ENCODE measurements at regions of chr12 and their contacts with region 1.

Region 1: DNA sequence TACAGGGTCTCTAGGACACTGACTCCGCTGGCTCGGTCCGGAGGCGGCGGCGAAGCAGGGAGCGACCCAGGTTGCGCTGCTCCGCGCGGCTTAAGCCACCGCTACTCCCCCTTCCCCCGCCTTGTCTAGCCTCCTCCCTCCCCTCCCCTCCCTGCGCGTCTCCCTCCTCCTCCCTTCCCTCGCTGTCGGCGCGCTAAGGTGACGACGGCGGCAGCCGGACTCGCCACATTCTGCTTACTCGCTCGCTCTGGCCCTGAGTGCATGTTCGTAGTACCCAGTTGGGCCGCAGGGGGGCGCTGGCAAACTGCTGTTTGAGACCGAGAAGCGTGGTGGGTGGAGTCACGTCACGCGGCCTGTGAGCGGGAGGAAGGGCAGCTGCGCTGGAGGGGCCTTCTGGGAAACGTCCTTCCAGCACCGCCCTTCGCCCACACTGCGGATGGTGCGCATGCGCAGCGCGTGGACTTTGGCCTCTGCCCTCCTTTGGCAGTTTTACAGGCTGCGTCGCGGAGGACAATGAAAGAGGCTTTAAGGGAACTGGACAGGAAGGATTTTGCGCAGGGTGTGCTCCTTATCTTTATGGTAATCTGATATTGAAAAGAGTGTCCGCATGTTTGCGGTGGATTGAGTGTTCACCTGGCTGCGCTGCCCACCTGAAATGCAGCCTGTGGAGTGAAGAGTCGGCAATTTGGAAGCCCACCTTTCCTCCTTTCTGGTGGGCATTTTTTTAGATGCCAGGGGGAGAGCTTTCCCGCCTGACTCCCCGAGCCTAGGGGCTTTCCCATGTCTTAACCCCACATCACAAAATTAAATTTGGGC is at the start of gene SCAF11:
- DNase-seq: peak; percentile 100
- ATAC-seq: peak; percentile 83
- H3K4me3 Mint-ChIP-seq: peak within 1 kb of the TSS; percentile 96
- H3K27ac Mint-ChIP-seq: peak within 1 kb of the TSS; percentile 98
- H3K4me1 Mint-ChIP-seq: peaks cover 47% of the 10 kb centered on the region
- H3K27me3 Mint-ChIP-seq: no peaks in the 10 kb centered on the region
- CTCF ChIP-seq: no peak
- total RNA-seq, gene SCAF11: 180 and 198 TPM in 2 replicates

Region 2: GRCh38 chr12:45728630-45729232 is 261.9 kb before region 1 on chr12:
- CTCF ChIA-PET with region 1: no interaction called
- POLR2A ChIA-PET with region 1: interaction called, 43 read pairs
- intact Hi-C with region 1: loop called (anchors 1 kb)
- DNase-seq: peak; percentile 97
- ATAC-seq: peak; percentile 68
- H3K4me3 Mint-ChIP-seq: peak overlapping the region; percentile 92
- H3K27ac Mint-ChIP-seq: peak overlapping the region; percentile 99
- H3K4me1 Mint-ChIP-seq: peaks cover 41% of the 10 kb centered on the region
- H3K27me3 Mint-ChIP-seq: no peaks in the 10 kb centered on the region
- CTCF ChIP-seq: peak; percentile 60

Region 3: DNA sequence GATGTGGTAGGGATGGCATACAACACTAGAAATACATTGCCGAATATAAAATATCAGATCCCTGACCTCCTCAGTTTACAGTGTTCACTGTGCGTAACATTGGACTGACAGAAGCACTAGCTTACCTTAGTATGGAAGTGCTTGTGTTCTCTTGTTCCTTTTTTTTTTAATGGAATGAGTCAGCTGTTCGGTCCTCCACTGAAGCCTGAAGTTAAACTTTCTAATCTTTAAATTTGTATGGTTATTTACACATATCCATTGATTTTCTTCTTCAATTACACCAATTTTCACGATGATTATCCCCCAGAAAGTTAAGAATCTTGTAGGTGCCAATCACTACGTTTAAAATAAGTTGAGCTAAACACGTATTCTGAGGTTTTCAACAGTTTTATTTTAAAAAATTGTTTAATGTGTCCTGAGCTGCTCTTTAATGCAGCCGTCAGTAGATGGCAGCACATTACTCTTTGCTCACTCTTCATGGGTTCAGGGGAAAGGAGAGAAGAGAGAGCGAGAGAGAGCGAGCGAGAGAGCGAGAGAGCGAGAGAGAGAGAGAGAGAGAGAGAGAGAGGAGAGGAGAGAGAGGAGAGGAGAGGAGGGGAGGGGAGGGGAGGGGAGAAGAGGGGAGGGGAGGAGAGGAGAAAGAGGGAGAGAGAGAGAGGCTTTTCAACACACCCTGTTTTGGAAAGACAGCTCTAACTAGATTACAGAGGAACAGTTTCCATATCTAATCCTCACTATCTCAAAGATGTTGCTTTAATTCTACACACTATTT is 134.4 kb after region 1 on chr12:
- CTCF ChIA-PET with region 1: no interaction called
- POLR2A ChIA-PET with region 1: no interaction called
- intact Hi-C with region 1: loop called (anchors 2 kb)
- DNase-seq: no peak
- ATAC-seq: peak; percentile 93
- H3K4me3 Mint-ChIP-seq: peak overlapping the region; percentile 67
- H3K27ac Mint-ChIP-seq: peak overlapping the region; percentile 72
- H3K4me1 Mint-ChIP-seq: peaks cover 5% of the 10 kb centered on the region
- H3K27me3 Mint-ChIP-seq: peaks cover 5% of the 10 kb centered on the region
- CTCF ChIP-seq: peak; percentile 75

Region 4: DNA sequence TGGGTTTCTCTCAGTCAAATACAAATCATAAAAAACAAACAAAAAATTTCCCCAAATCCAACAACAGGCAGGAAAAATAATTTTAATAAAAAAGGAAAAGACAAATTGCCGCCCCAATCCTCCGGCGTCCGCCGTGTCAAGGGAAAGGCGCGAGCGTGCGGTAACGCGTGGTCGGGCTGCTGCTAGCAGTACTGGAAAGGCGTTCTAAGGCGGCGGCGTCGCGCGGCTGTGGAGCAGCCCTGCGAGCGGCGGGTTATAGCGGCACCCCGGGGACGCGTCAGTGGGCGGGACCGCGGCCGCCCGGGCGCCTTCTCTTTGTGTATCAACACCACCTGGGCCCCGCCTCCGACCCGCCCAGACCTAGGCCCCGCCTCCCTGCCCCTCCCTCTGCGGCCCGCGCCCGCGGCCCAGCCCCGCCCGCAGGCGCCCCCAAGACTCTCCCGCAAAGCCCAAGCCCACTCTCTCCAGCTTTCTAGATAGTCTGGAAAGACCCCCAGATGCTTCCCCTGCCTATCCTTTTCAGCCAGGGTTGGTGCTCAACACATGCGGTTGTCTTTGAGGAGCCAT is 382.0 kb after region 1 on chr12 and contains the start of gene SLC38A2:
- CTCF ChIA-PET with region 1: no interaction called
- POLR2A ChIA-PET with region 1: interaction called, 3 read pairs
- intact Hi-C with region 1: loop called (anchors 1 kb)
- DNase-seq: peak; percentile 97
- ATAC-seq: peak; percentile 88
- H3K4me3 Mint-ChIP-seq: peak within 1 kb of the TSS; percentile 96
- H3K27ac Mint-ChIP-seq: peak within 1 kb of the TSS; percentile 99
- H3K4me1 Mint-ChIP-seq: peaks cover 46% of the 10 kb centered on the region
- H3K27me3 Mint-ChIP-seq: no peaks in the 10 kb centered on the region
- CTCF ChIP-seq: no peak
- total RNA-seq, gene SLC38A2: 231 and 247 TPM in 2 replicates

Region 5: GRCh38 chr12:46711756-46712155 is 721.1 kb after region 1 on chr12:
- CTCF ChIA-PET with region 1: no interaction called
- POLR2A ChIA-PET with region 1: no interaction called
- intact Hi-C with region 1: no loop called
- DNase-seq: no peak
- ATAC-seq: no peak
- H3K4me3 Mint-ChIP-seq: no peak overlapping the region
- H3K27ac Mint-ChIP-seq: no peak overlapping the region
- H3K4me1 Mint-ChIP-seq: no peaks in the 10 kb centered on the region
- H3K27me3 Mint-ChIP-seq: no peaks in the 10 kb centered on the region
- CTCF ChIP-seq: no peak

Region 6: DNA sequence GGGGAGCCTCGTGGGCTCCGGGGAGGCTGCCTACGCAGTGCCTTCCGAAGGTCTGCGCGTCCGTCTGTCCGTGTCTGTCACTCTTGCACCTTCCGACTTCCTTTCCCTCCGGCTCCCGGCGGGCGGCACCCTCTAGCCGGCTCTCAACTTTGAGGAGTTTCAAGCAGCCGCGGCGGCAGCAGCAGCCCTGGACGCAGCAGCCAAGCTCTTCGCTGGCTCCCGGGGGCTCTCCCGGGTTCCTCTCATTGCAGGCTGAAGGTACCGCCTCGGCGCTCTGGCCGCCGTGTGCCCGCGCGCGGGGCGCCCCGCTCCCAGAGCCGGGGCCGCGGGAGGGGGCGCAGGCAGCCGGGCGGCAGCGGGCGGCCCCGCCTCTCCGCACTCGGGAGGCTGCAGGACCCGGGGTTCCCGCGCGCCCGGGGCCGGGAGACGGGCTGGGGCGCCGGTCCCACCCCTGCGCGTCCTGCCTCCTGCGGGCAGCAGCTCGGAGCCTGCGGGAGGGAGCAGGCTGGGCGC is 1088.8 kb after region 1 on chr12 and contains the starts of genes AMIGO2 and PCED1B:
- CTCF ChIA-PET with region 1: no interaction called
- POLR2A ChIA-PET with region 1: no interaction called
- intact Hi-C with region 1: loop called (anchors 5 kb)
- DNase-seq: no peak
- ATAC-seq: peak; percentile 47
- H3K4me3 Mint-ChIP-seq: peak within 1 kb of the TSS; percentile 99
- H3K27ac Mint-ChIP-seq: peak within 1 kb of the TSS; percentile 95
- H3K4me1 Mint-ChIP-seq: peaks cover 67% of the 10 kb centered on the region
- H3K27me3 Mint-ChIP-seq: no peaks in the 10 kb centered on the region
- CTCF ChIP-seq: no peak
- total RNA-seq, gene AMIGO2: 13.9 and 14.1 TPM in 2 replicates
- total RNA-seq, gene PCED1B: 60.9 and 65.4 TPM in 2 replicates

Region 7: GRCh38 chr12:47397664-47398281 is 1407.1 kb after region 1 on chr12:
- CTCF ChIA-PET with region 1: no interaction called
- POLR2A ChIA-PET with region 1: interaction called, 7 read pairs
- intact Hi-C with region 1: loop called (anchors 10 kb)
- DNase-seq: no peak
- ATAC-seq: peak; percentile 72
- H3K4me3 Mint-ChIP-seq: peak overlapping the region; percentile 61
- H3K27ac Mint-ChIP-seq: peak overlapping the region; percentile 94
- H3K4me1 Mint-ChIP-seq: peaks cover 92% of the 10 kb centered on the region
- H3K27me3 Mint-ChIP-seq: no peaks in the 10 kb centered on the region
- CTCF ChIP-seq: no peak

Measured in activated B cell treated with CpG ODN at 0.5 μM for 24 hours (primary cell).